Natural killer cell (primary cell): ENCODE measurements at regions of chr10 and their contacts with region 1.

Region 1: DNA sequence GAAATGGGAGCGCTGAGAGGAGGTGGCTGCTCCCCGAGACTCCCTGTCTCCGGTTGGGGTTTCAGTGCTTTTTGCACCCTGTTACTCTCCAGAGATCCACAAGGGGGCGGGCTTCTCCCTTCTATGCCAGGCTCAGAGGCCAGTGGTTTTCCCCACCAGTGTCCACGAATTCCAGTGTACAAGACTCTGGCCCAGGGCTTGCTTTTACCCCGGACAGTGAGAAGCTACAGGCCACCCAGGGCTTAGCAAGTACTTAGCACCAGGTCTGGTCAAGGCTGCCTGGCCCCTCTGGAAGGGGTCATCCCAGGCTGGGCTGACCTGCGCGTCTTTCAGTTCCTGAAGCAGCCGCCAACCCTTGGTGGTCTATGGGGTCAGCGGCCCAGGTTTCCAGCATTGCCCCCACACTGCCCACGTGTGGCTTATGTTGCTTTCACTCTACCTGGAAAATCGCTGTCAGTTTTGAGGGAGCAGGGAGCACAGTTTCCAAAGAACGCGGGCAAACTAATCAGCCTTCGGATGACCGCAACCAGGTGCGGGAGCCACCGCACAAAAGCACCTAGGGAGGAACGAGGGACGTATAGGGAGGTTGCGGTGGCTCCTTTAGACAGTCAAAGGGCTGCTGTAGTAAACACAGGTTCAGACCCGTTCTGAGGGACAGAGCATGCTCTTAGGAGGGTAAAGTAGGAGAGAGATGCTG is 6.8 kb downstream of the CYP26A1 start:
- DNase-seq: peak in 1 of 2 donors; percentile 69
- ATAC-seq: peak; percentile 58 to 81 (median 69)
- H3K4me3 ChIP-seq: no peak overlapping the region
- H3K4me3 Mint-ChIP-seq: no peak overlapping the region
- H3K27ac ChIP-seq: no peak overlapping the region
- H3K27ac Mint-ChIP-seq: no peak overlapping the region
- H3K4me1 ChIP-seq: peaks cover 3% of the 10 kb centered on the region
- H3K4me1 Mint-ChIP-seq: peaks cover 4 to 5% of the 10 kb centered on the region in 2 donors
- H3K27me3 ChIP-seq: peaks cover 3% of the 10 kb centered on the region
- H3K27me3 Mint-ChIP-seq: peaks cover 18 to 52% of the 10 kb centered on the region in 2 donors
- CTCF ChIP-seq: peak; percentile 66

Region 2: GRCh38 chr10:92942284-92942683 is 138.2 kb before region 1 on chr10:
- intact Hi-C with region 1: no loop called
- DNase-seq: no peak
- ATAC-seq: no peak
- H3K4me3 ChIP-seq: no peak overlapping the region
- H3K4me3 Mint-ChIP-seq: no peak overlapping the region
- H3K27ac ChIP-seq: no peak overlapping the region
- H3K27ac Mint-ChIP-seq: no peak overlapping the region
- H3K4me1 ChIP-seq: no peaks in the 10 kb centered on the region
- H3K4me1 Mint-ChIP-seq: no peaks in the 10 kb centered on the region
- H3K27me3 ChIP-seq: no peaks in the 10 kb centered on the region
- H3K27me3 Mint-ChIP-seq: no peaks in the 10 kb centered on the region
- CTCF ChIP-seq: no peak

Region 3: GRCh38 chr10:93515071-93516005 is 434.8 kb after region 1 on chr10:
- intact Hi-C with region 1: loop called (anchors 5 kb)
- DNase-seq: no peak
- ATAC-seq: no peak
- H3K4me3 ChIP-seq: no peak overlapping the region
- H3K4me3 Mint-ChIP-seq: no peak overlapping the region
- H3K27ac ChIP-seq: no peak overlapping the region
- H3K27ac Mint-ChIP-seq: no peak overlapping the region
- H3K4me1 ChIP-seq: no peaks in the 10 kb centered on the region
- H3K4me1 Mint-ChIP-seq: no peaks in the 10 kb centered on the region
- H3K27me3 ChIP-seq: no peaks in the 10 kb centered on the region
- H3K27me3 Mint-ChIP-seq: no peaks in the 10 kb centered on the region
- CTCF ChIP-seq: no peak